ENCODE measurements at regions of chr4 and their contacts with region 1.

Region 1: DNA sequence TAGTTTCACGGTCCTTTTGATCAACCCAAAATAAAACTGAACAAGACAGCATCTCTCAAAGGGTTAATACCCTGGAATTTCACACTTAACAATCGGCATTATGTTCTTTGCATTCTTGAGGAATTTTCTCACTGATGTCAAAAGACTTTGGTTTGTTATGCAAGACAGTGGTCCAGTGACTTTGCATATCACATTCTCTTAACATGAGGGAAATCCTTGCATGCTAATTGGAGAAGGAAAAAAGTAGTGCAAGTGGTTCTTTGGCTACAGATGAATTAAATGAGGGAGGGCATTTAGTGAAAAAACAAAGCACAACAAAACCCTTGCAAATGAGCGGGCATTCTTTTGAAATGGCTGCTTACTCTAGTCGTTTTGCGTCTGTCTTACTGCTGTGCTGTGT is 105.1 kb upstream of the LIMCH1 start:
- DNase-seq: no peak
- H3K4me3 ChIP-seq: no peak overlapping the region
- H3K27ac ChIP-seq: peak overlapping the region; percentile 65 to 96 (median 91)
- H3K4me1 ChIP-seq: peaks cover 63 to 75% of the 10 kb centered on the region in 2 donors
- H3K27me3 ChIP-seq: no peaks in the 10 kb centered on the region
- CTCF ChIP-seq: no peak
- POLR2A ChIP-seq: no peak

Region 2: GRCh38 chr4:41360214-41360920 is 72.5 kb before region 1 on chr4:
- intact Hi-C with region 1: loop called (anchors 10 kb)
- DNase-seq: peak; percentile 90
- H3K4me3 ChIP-seq: peak overlapping the region; percentile 65 to 81 (median 70)
- H3K27ac ChIP-seq: peak overlapping the region; percentile 88 to 95 (median 89)
- H3K4me1 ChIP-seq: peaks cover 41 to 43% of the 10 kb centered on the region in 2 donors
- H3K27me3 ChIP-seq: no peaks in the 10 kb centered on the region
- CTCF ChIP-seq: no peak
- POLR2A ChIP-seq: peak in 1 of 2 donors; percentile 75

Region 3: GRCh38 chr4:41757521-41758156 is 324.8 kb after region 1 on chr4:
- intact Hi-C with region 1: no loop called
- DNase-seq: no peak
- H3K4me3 ChIP-seq: no peak overlapping the region
- H3K27ac ChIP-seq: no peak overlapping the region
- H3K4me1 ChIP-seq: no peaks in the 10 kb centered on the region
- H3K27me3 ChIP-seq: peaks cover 8% of the 10 kb centered on the region
- CTCF ChIP-seq: no peak
- POLR2A ChIP-seq: no peak

Measured in thyroid gland (tissue), 4 donors.